GM12878 (cell line): ENCODE measurements at regions of chr3 and their contacts with region 1.

Region 1: DNA sequence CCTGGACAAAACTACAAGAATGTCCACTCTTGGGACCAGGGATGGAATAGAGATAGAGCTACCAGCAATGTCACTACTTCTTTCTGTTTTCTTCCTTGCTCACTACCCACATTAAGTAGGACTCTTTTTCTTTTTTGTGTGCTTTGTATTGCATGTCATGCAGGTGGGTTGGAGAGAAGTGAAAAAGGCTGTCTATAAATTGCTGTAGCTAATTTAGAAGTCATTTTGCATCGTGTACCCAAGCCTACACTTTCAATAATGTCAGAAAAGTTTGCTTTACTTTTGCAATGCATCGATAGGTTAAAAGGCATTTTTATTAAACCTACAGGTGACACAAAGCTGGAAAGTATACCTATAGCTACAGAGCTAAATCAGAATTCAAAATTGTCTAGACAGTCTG is 58.9 kb downstream of the GTF2E1 start:
- DNase-seq: no peak
- ATAC-seq: no peak
- H3K4me3 ChIP-seq: no peak overlapping the region
- H3K27ac ChIP-seq: no peak overlapping the region
- H3K4me1 ChIP-seq: no peaks in the 10 kb centered on the region
- H3K27me3 ChIP-seq: no peaks in the 10 kb centered on the region
- CTCF ChIP-seq: no peak
- EP300 ChIP-seq: no peak
- POLR2A ChIP-seq: no peak
- RAD21 ChIP-seq: no peak

Region 2: GRCh38 chr3:120558771-120559241 is 242.7 kb before region 1 on chr3:
- CTCF ChIA-PET with region 1: interaction called, 12 read pairs
- POLR2A ChIA-PET with region 1: no interaction called
- RAD21 ChIA-PET with region 1: interaction called, 4 read pairs
- SMC1A ChIA-PET with region 1: interaction called, 9 read pairs
- in situ Hi-C with region 1: no loop called
- intact Hi-C with region 1: no loop called
- DNase-seq: peak; percentile 33
- ATAC-seq: peak; percentile 93
- H3K4me3 ChIP-seq: peak overlapping the region; percentile 55; the same call in 1 of the 2 replicates
- H3K27ac ChIP-seq: no peak overlapping the region
- H3K4me1 ChIP-seq: peaks cover 3% of the 10 kb centered on the region; the same call in 1 of the 2 replicates
- H3K27me3 ChIP-seq: no peaks in the 10 kb centered on the region
- CTCF ChIP-seq: peak; percentile 88 to 95 (median 95)
- EP300 ChIP-seq: peak in 1 of 2 experiments; percentile 43; a peak in 1 of 4 replicates
- POLR2A ChIP-seq: no peak
- RAD21 ChIP-seq: peak; percentile 84

Region 3: GRCh38 chr3:120678331-120678947 is 123.0 kb before region 1 on chr3:
- CTCF ChIA-PET with region 1: no interaction called
- POLR2A ChIA-PET with region 1: no interaction called
- RAD21 ChIA-PET with region 1: no interaction called
- SMC1A ChIA-PET with region 1: no interaction called
- in situ Hi-C with region 1: no loop called
- intact Hi-C with region 1: no loop called
- DNase-seq: peak; percentile 35
- ATAC-seq: peak; percentile 92
- H3K4me3 ChIP-seq: no peak overlapping the region
- H3K27ac ChIP-seq: peak overlapping the region; percentile 45
- H3K4me1 ChIP-seq: peaks cover 12% of the 10 kb centered on the region; the same call in 1 of the 2 replicates
- H3K27me3 ChIP-seq: no peaks in the 10 kb centered on the region
- CTCF ChIP-seq: no peak
- EP300 ChIP-seq: no peak
- POLR2A ChIP-seq: no peak
- RAD21 ChIP-seq: no peak